Naive thymus-derived CD4-positive, alpha-beta T cell (primary cell): ENCODE measurements at regions of chr10 and their contacts with region 1.

Region 1: DNA sequence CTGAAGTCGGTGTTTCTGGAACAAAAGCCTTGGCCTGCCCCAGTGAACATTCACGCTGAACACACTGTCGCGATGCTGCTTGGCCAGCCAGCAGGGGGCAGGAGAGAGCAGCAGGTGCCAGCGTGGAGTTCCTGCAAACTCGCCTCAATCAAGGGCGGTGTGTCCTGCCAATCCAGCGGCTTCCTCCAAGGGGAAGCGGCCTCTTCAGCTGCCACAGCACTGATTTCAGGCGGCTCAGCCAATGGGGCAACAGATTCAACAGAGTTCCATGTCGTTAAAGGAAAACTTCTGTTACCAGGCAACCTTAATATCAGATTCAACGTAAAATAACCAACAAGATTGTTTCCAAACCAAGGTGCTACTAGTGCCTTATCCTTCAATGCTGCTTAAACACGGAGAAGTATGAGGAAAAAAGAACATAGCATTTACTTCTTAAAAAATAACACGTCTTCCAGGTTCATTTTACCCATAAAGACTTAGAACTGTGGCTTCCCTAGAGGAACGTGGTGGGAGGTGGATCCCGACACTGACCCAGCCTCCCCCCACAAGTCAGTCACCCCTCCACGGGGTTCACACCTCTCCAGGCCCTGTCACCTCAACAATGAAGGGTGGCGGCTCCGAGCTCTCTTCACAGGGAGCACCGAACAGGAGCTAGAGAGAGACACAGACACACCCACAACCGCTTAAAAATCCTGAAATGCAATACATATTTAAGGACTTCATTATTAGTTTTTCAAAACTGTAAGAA is 178.2 kb downstream of the DIP2C start:
- DNase-seq: peak; percentile 55 to 88 (median 71)
- ATAC-seq: peak; percentile 85
- H3K4me3 ChIP-seq: no peak overlapping the region
- H3K4me3 Mint-ChIP-seq: peak overlapping the region in 6 of 10 donors; percentile 1 to 41 (median 23)
- H3K27ac ChIP-seq: no peak overlapping the region
- H3K27ac Mint-ChIP-seq: peak overlapping the region in 4 of 9 donors; percentile 9 to 89 (median 64)
- H3K4me1 ChIP-seq: no peaks in the 10 kb centered on the region
- H3K4me1 Mint-ChIP-seq: peaks cover 7 to 30% (median 13%) of the 10 kb centered on the region in 7 donors
- H3K27me3 ChIP-seq: no peaks in the 10 kb centered on the region
- H3K27me3 Mint-ChIP-seq: peaks cover 0 to 9% (median 4%) of the 10 kb centered on the region in 5 donors

Region 2: DNA sequence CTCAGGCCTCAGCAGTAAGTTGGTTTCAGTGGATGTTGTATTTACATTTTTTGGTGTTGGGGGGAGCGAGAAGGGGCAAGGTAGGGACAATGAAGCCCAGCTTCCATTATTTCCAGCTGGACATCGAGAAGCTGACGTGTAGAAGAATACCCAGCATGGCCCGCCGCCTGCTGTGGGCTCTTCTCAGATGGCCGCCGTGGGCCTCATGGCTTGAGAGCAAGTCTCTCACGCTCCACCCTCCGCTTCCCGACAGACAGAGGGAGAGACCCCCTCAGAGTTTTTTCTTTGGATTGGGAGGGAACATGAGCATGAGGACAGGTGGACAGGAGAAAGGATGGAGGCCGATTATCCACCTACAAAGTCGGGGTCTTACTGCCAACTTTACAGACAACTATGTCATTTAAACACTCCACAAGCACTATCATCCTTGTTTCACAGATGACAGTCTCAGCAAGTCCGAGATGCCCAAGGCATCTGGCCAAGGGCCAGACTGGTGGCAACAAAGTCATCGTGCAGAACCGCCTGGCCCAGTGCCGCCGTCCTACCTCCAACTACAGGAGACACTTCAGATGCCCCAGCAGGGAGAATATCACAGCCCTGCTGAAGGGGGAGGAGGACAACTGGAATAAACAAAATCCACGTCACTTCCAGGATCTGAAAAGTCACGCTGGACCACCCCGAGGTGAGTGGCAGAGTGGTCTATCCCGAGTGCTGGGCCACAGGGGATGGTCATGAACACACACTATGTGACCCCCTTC is 17.7 kb before region 1 on chr10:
- CTCF ChIA-PET with region 1: no interaction called
- POLR2A ChIA-PET with region 1: no interaction called
- intact Hi-C with region 1: no loop called
- DNase-seq: no peak
- ATAC-seq: no peak
- H3K4me3 ChIP-seq: no peak overlapping the region
- H3K4me3 Mint-ChIP-seq: no peak overlapping the region
- H3K27ac ChIP-seq: no peak overlapping the region
- H3K27ac Mint-ChIP-seq: peak overlapping the region in 1 of 9 donors; percentile 6
- H3K4me1 ChIP-seq: no peaks in the 10 kb centered on the region
- H3K4me1 Mint-ChIP-seq: peaks cover 0 to 4% (median 0%) of the 10 kb centered on the region in 7 donors
- H3K27me3 ChIP-seq: no peaks in the 10 kb centered on the region
- H3K27me3 Mint-ChIP-seq: peaks cover 4 to 12% (median 11%) of the 10 kb centered on the region in 5 donors

Region 3: DNA sequence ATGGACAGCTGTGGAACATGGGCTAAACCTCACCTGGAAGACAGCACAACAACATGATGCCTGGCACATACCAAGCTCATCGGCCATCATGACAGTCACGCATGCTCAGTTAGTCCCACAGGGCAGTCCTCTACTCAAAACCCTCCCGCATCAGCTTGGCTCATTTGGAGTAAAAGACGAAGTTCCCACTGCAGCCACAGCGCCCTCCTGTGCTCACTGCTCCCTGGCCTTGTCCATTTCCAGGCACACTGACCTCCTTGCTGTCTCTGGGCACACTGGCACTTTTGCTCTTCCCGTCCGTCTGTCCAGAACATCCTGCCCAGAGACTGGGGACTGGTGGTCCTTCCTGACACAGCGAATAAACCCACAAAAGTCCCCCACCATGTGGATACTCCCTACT is 354.0 kb after region 1 on chr10:
- CTCF ChIA-PET with region 1: no interaction called
- POLR2A ChIA-PET with region 1: no interaction called
- intact Hi-C with region 1: no loop called
- DNase-seq: no peak
- ATAC-seq: no peak
- H3K4me3 ChIP-seq: no peak overlapping the region
- H3K4me3 Mint-ChIP-seq: no peak overlapping the region
- H3K27ac ChIP-seq: no peak overlapping the region
- H3K27ac Mint-ChIP-seq: peak overlapping the region in 3 of 9 donors; percentile 28 to 73 (median 44)
- H3K4me1 ChIP-seq: no peaks in the 10 kb centered on the region
- H3K4me1 Mint-ChIP-seq: peaks cover 12 to 33% (median 16%) of the 10 kb centered on the region in 7 donors
- H3K27me3 ChIP-seq: no peaks in the 10 kb centered on the region
- H3K27me3 Mint-ChIP-seq: no peaks in the 10 kb centered on the region

Region 4: DNA sequence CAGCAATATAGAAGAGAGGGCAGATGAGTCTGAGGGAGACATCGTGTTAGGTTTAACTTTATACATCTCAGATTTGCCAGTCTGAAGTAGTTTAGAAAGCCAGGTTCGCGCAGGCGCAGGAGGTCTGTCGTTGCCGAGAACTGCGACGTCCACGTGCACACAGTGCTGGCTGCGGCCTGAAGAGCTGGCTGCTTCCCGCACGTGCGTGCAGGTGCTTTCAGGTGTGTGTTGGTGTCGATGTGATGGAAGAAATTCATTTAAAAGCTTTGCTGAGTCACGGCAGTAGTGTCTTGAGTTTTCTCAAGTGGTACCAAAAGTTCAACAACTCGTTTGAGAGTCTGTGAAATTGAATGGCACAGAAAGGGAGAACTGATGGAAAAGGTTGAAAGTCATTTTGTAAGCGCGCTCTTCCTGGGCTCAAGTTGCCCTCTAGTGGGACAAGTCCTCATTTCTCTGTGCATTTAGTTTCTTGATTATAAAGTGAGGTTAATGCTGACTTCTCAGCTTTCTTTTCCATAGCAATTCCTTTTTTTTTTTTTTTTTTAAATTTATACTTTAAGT is 563.6 kb after region 1 on chr10:
- CTCF ChIA-PET with region 1: no interaction called
- POLR2A ChIA-PET with region 1: no interaction called
- intact Hi-C with region 1: loop called (anchors 2 to 10 kb)
- DNase-seq: peak in 3 of 9 donors; percentile 7 to 23 (median 21)
- ATAC-seq: peak; percentile 34
- H3K4me3 ChIP-seq: no peak overlapping the region
- H3K4me3 Mint-ChIP-seq: peak overlapping the region in 1 of 10 donors; percentile 0
- H3K27ac ChIP-seq: no peak overlapping the region
- H3K27ac Mint-ChIP-seq: peak overlapping the region in 6 of 9 donors; percentile 9 to 83 (median 46)
- H3K4me1 ChIP-seq: peaks cover 3 to 4% of the 10 kb centered on the region in 2 donors
- H3K4me1 Mint-ChIP-seq: peaks cover 8 to 29% (median 21%) of the 10 kb centered on the region in 7 donors
- H3K27me3 ChIP-seq: no peaks in the 10 kb centered on the region
- H3K27me3 Mint-ChIP-seq: no peaks in the 10 kb centered on the region